ENCODE measurements at regions of chr4 and their contacts with region 1.

Region 1: DNA sequence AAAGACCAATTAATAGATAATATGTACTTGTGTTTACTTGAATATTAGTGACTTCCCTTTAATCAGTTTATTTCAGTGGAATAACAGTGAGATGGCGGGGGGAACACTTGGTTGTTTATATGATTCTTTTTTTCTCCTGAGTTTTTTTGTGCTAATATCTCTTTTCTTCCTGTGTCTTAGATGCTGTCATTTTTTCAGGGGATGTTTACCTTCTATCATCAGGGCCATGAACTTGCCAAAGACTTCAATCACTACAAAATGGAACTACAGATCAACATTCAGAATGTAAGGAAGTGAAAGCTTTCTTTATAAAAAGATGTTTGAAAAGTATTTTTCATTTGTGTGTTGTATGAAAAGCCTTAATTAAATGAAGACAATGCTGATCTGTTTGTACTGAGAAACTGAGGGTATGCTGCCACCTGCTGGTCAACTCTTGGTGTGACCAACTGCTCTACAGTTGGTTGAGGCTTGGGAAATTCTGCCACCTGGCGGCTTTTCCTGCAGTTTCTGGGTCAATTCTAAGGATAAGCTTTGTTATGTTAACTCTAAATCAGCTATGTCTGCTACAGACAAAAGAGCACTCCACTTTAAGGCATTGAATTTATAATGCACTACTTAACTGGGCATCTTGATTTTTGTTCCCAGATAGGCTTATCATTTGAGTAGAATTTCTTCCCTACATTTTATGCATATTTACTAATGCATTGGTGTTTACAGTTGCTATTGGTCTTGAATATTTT is 134.8 kb downstream of the ARHGAP10 start:
- DNase-seq: peak; percentile 98
- H3K4me3 Mint-ChIP-seq: no peak overlapping the region
- H3K27ac Mint-ChIP-seq: no peak overlapping the region
- H3K4me1 Mint-ChIP-seq: no peaks in the 10 kb centered on the region
- H3K27me3 Mint-ChIP-seq: no peaks in the 10 kb centered on the region

Region 2: GRCh38 chr4:147160908-147161513 is 705.7 kb before region 1 on chr4:
- CTCF ChIA-PET with region 1: interaction called, 3 read pairs
- intact Hi-C with region 1: loop called (anchors 1 kb)
- DNase-seq: peak; percentile 18
- H3K4me3 Mint-ChIP-seq: no peak overlapping the region
- H3K27ac Mint-ChIP-seq: no peak overlapping the region
- H3K4me1 Mint-ChIP-seq: peaks cover 2% of the 10 kb centered on the region
- H3K27me3 Mint-ChIP-seq: peaks cover 35% of the 10 kb centered on the region

Region 3: DNA sequence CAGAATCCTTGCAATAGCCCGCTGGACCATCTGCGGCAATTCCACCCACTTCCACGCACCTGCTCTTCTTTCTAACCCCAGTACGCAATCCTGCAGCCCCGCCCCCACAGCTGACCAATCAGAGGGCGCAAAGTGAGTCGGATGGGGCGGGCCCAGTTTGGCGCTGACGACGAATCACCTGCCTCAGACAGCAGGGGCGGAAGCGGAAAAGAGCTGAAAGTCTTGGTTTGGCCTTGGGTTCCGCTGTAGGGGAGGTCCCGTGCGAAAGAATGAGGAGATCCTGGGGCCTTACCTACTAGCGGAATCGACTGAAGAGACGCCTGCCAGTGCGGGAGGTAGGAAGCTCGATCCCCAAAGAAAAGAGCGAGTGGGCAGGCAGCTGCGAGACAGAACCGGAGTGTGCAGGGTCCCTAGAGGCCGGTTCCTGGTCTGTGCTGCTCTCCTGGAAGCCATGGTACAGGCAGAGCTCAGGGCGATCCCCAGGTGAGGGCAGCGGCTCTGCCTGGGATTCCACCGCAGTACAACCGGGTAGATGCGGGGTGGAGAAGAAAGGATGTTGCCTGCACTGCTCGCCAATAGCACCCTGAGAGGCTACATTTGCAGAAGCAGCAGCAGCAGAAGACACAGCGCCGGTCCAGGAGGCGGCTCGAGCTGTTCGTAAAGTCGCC is 249.4 kb before region 1 on chr4 and contains the start of gene TMEM184C:
- CTCF ChIA-PET with region 1: interaction called, 18 read pairs
- intact Hi-C with region 1: loop called (anchors 1 kb)
- DNase-seq: peak; percentile 100
- H3K4me3 Mint-ChIP-seq: peak within 1 kb of the TSS; percentile 89
- H3K27ac Mint-ChIP-seq: peak within 1 kb of the TSS; percentile 93
- H3K4me1 Mint-ChIP-seq: peaks cover 23% of the 10 kb centered on the region
- H3K27me3 Mint-ChIP-seq: no peaks in the 10 kb centered on the region
- total RNA-seq, gene TMEM184C: 11.5 to 12.5 TPM

Region 4: GRCh38 chr4:147707865-147708672 is 158.6 kb before region 1 on chr4:
- CTCF ChIA-PET with region 1: interaction called, 86 read pairs
- intact Hi-C with region 1: loop called (anchors 1 kb)
- DNase-seq: peak; percentile 70
- H3K4me3 Mint-ChIP-seq: no peak overlapping the region
- H3K27ac Mint-ChIP-seq: no peak overlapping the region
- H3K4me1 Mint-ChIP-seq: no peaks in the 10 kb centered on the region
- H3K27me3 Mint-ChIP-seq: no peaks in the 10 kb centered on the region

Region 5: GRCh38 chr4:147846318-147847155 is 20.2 kb before region 1 on chr4:
- CTCF ChIA-PET with region 1: interaction called, 10 read pairs
- intact Hi-C with region 1: no loop called
- DNase-seq: peak; percentile 11
- H3K4me3 Mint-ChIP-seq: no peak overlapping the region
- H3K27ac Mint-ChIP-seq: no peak overlapping the region
- H3K4me1 Mint-ChIP-seq: no peaks in the 10 kb centered on the region
- H3K27me3 Mint-ChIP-seq: no peaks in the 10 kb centered on the region

Region 6: GRCh38 chr4:147909225-147909624 is 42.5 kb after region 1 on chr4:
- CTCF ChIA-PET with region 1: interaction called, 10 read pairs
- intact Hi-C with region 1: no loop called
- DNase-seq: no peak
- H3K4me3 Mint-ChIP-seq: no peak overlapping the region
- H3K27ac Mint-ChIP-seq: no peak overlapping the region
- H3K4me1 Mint-ChIP-seq: no peaks in the 10 kb centered on the region
- H3K27me3 Mint-ChIP-seq: no peaks in the 10 kb centered on the region

Region 7: DNA sequence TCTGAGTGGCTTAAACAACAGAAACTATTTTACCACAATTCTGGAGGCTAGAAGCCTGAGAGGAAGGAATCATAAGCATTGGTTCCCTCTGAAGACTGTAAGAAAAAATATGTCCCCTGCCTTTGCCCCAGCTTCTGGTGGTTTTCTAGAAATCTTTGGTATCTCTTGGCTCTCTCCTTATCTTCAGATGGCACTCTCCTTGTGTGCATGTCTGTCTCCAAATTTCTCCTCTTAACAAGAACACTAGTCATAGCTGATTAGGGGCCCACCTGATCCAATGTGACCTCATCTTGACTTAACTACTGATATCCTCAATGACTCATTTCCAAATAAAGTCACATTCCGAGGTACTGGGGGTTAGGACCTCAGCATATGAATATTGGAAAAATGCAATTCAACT is 1210.5 kb after region 1 on chr4:
- CTCF ChIA-PET with region 1: no interaction called
- intact Hi-C with region 1: no loop called
- DNase-seq: no peak
- H3K4me3 Mint-ChIP-seq: no peak overlapping the region
- H3K27ac Mint-ChIP-seq: no peak overlapping the region
- H3K4me1 Mint-ChIP-seq: no peaks in the 10 kb centered on the region
- H3K27me3 Mint-ChIP-seq: peaks cover 4% of the 10 kb centered on the region